Activated CD4-positive, alpha-beta T cell treated with anti-CD3 and anti-CD28 coated beads for 36 hours (primary cell): ENCODE measurements at regions of chr10 and their contacts with region 1.

Region 1: DNA sequence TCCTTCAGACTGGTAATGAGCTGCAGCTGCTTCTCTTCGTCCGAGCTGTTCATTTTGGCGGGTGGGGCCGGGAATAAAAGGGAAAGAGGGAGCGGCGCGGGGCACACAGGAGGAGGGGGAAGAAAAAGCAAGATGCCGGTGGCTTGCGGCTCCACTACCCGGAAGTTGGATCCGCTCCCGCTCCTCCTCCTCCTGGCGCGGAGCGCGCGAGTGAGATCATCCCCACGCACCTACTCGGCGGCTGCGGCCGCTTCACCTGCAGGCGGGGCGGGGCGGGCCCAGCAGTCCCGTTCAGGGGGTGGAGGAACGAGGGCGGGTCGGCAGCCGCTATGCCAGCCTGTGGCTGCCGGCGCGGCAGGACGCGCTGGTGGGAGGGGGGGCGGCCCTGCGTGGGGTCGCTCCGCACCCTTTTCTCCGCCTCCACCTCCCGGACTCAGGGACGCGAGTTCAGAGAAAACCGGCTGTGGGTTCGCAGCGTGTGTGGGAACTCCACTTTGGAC is at the start of gene SHTN1:
- DNase-seq: peak; percentile 65
- ATAC-seq: peak; percentile 86
- H3K4me3 Mint-ChIP-seq: peak within 1 kb of the TSS; percentile 65
- H3K27ac Mint-ChIP-seq: no peak within 1 kb of the TSS
- H3K4me1 Mint-ChIP-seq: no peaks in the 10 kb centered on the region
- H3K27me3 Mint-ChIP-seq: peaks cover 38% of the 10 kb centered on the region
- total RNA-seq, gene SHTN1: 0.37 to 0.43 TPM

Region 2: DNA sequence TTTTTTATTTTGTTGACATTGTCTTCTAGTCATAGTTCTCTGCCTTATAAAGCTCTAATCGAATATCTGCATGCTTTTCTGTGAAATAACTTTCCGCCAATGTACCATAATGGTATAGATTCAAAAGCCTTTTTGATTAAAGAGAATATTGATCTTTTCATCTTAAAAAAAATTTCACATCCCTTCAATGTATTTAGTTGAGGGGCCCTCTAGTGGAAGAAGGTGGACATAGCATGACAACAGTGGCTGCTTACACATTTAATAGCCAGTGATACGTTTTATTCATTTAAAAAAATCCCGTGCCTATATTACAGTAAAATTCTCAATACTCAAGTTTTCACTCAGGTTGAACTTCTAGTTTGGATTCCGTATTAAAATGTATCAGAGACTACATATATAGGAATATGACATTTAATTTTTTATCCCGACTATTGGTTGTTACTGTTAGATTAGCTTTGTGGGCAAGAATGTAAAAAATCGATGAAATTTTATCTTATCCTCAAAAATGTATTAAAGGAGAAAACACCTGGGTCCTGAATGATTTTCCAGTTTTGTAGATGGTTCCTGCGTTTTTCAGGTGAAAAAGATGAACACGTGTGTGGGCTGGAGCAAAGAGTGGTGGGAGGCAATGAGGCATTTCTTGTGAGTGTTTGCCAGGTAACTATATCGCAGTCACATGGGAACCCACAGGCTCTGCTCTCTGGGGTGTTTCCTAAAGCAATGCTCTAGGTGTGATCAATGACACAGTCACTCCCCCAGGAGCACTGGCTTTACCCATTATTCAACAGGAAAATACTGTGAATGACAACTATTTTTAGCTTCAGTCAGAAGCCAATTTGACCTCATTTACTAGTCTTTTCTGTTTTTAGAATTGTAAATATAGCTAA is 483.4 kb before region 1 on chr10:
- CTCF ChIA-PET with region 1: no interaction called
- POLR2A ChIA-PET with region 1: no interaction called
- intact Hi-C with region 1: no loop called
- DNase-seq: peak; percentile 47
- ATAC-seq: no peak
- H3K4me3 Mint-ChIP-seq: no peak overlapping the region
- H3K27ac Mint-ChIP-seq: no peak overlapping the region
- H3K4me1 Mint-ChIP-seq: no peaks in the 10 kb centered on the region
- H3K27me3 Mint-ChIP-seq: peaks cover 4% of the 10 kb centered on the region

Region 3: GRCh38 chr10:116796910-116797513 is 208.1 kb before region 1 on chr10:
- CTCF ChIA-PET with region 1: no interaction called
- POLR2A ChIA-PET with region 1: no interaction called
- intact Hi-C with region 1: loop called in 1 of 2 experiments (anchors 10 kb)
- DNase-seq: peak; percentile 86
- ATAC-seq: peak; percentile 68
- H3K4me3 Mint-ChIP-seq: no peak overlapping the region
- H3K27ac Mint-ChIP-seq: no peak overlapping the region
- H3K4me1 Mint-ChIP-seq: peaks cover 7% of the 10 kb centered on the region
- H3K27me3 Mint-ChIP-seq: peaks cover 25% of the 10 kb centered on the region